ENCODE measurements at regions of chrX and their contacts with region 1.

Region 1: GRCh38 chrX:106894392-106894909 is 8.7 kb downstream of the RIPPLY1 start:
- DNase-seq: peak; percentile 36 to 49 (median 47)
- H3K4me3 ChIP-seq: no peak overlapping the region
- H3K4me3 Mint-ChIP-seq: no peak overlapping the region
- H3K27ac ChIP-seq: no peak overlapping the region
- H3K27ac Mint-ChIP-seq: no peak overlapping the region
- H3K4me1 ChIP-seq: no peaks in the 10 kb centered on the region
- H3K4me1 Mint-ChIP-seq: peaks cover 0 to 4% (median under 1%) of the 10 kb centered on the region in 4 donors
- H3K27me3 ChIP-seq: no peaks in the 10 kb centered on the region
- H3K27me3 Mint-ChIP-seq: no peaks in the 10 kb centered on the region

Region 2: GRCh38 chrX:106302242-106302662 is 592.2 kb before region 1 on chrX:
- CTCF ChIA-PET with region 1: no interaction called
- POLR2A ChIA-PET with region 1: no interaction called
- intact Hi-C with region 1: no loop called
- DNase-seq: no peak
- H3K4me3 ChIP-seq: no peak overlapping the region
- H3K4me3 Mint-ChIP-seq: no peak overlapping the region
- H3K27ac ChIP-seq: no peak overlapping the region
- H3K27ac Mint-ChIP-seq: no peak overlapping the region
- H3K4me1 ChIP-seq: no peaks in the 10 kb centered on the region
- H3K4me1 Mint-ChIP-seq: no peaks in the 10 kb centered on the region
- H3K27me3 ChIP-seq: no peaks in the 10 kb centered on the region
- H3K27me3 Mint-ChIP-seq: peaks cover 0 to 2% of the 10 kb centered on the region in 2 donors

Region 3: DNA sequence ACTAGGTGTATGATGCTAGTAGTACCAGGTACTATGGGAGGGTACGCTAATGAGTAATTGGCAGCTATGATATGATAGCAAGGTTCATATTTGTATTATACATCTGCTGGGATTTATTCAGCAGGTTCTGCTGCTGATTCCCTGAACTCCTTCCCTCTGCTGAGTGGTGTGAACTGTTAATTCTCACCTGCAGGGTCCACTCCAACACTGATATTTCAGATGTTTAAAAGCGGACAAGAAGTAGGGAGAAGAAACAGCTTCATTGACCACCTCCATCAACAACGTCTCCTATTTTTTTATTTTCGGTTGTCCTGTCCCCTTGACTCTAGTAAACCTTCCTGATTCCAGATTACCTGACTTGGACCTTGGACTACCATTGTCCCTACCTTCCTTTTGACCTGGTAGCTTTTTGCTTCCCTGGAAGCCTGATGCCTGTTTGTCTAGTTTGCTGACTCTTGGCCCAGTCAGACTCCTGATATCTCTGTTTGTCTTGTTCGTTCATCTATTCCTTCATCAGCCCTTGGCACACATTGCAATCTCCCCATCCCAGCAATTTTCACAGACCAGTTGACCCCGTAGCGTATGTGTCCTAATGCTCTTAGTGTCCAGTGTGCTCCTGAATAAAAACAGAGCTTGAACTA is 201.9 kb before region 1 on chrX:
- CTCF ChIA-PET with region 1: no interaction called
- POLR2A ChIA-PET with region 1: no interaction called
- intact Hi-C with region 1: no loop called
- DNase-seq: no peak
- H3K4me3 ChIP-seq: no peak overlapping the region
- H3K4me3 Mint-ChIP-seq: no peak overlapping the region
- H3K27ac ChIP-seq: no peak overlapping the region
- H3K27ac Mint-ChIP-seq: no peak overlapping the region
- H3K4me1 ChIP-seq: no peaks in the 10 kb centered on the region
- H3K4me1 Mint-ChIP-seq: no peaks in the 10 kb centered on the region
- H3K27me3 ChIP-seq: no peaks in the 10 kb centered on the region
- H3K27me3 Mint-ChIP-seq: peaks cover 0 to 2% of the 10 kb centered on the region in 2 donors

Region 4: GRCh38 chrX:106952988-106953387 is 58.5 kb after region 1 on chrX:
- CTCF ChIA-PET with region 1: interaction called, 62 read pairs
- POLR2A ChIA-PET with region 1: no interaction called
- intact Hi-C with region 1: loop called (anchors 1 kb)
- DNase-seq: peak in 1 of 5 donors; percentile 6
- H3K4me3 ChIP-seq: no peak overlapping the region
- H3K4me3 Mint-ChIP-seq: no peak overlapping the region
- H3K27ac ChIP-seq: no peak overlapping the region
- H3K27ac Mint-ChIP-seq: no peak overlapping the region
- H3K4me1 ChIP-seq: no peaks in the 10 kb centered on the region
- H3K4me1 Mint-ChIP-seq: no peaks in the 10 kb centered on the region
- H3K27me3 ChIP-seq: no peaks in the 10 kb centered on the region
- H3K27me3 Mint-ChIP-seq: no peaks in the 10 kb centered on the region

Region 5: DNA sequence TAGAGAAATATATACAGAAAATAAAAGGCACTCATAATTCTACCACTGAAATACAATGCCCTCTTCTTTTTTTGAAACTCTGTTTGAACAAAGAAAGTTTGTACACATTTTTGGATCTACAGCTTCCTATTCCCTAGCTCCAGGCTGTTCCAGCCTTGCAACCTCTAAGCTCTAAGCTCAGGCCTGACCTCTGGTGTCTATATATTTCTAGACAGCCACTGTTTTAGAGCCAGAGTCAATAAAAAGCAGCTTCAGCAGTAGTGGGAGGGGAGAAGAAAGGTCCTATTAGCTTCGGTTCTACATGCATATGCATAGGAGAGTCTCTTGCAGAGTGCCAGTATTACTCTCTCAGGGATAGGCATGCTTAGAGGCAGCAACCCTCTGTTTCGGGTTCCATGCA is 65.5 kb after region 1 on chrX:
- CTCF ChIA-PET with region 1: interaction called, 62 read pairs
- POLR2A ChIA-PET with region 1: no interaction called
- intact Hi-C with region 1: no loop called
- DNase-seq: no peak
- H3K4me3 ChIP-seq: no peak overlapping the region
- H3K4me3 Mint-ChIP-seq: no peak overlapping the region
- H3K27ac ChIP-seq: no peak overlapping the region
- H3K27ac Mint-ChIP-seq: no peak overlapping the region
- H3K4me1 ChIP-seq: no peaks in the 10 kb centered on the region
- H3K4me1 Mint-ChIP-seq: no peaks in the 10 kb centered on the region
- H3K27me3 ChIP-seq: no peaks in the 10 kb centered on the region
- H3K27me3 Mint-ChIP-seq: no peaks in the 10 kb centered on the region

Region 6: GRCh38 chrX:107118322-107119147 is 224.1 kb after region 1 on chrX and contains the start of gene RBM41:
- CTCF ChIA-PET with region 1: no interaction called
- POLR2A ChIA-PET with region 1: no interaction called
- intact Hi-C with region 1: loop called (anchors 10 kb)
- DNase-seq: peak; percentile 69 to 88 (median 75)
- H3K4me3 ChIP-seq: peak within 1 kb of the TSS; percentile 72 to 73
- H3K4me3 Mint-ChIP-seq: peak within 1 kb of the TSS; percentile 98 to 100 (median 99)
- H3K27ac ChIP-seq: peak within 1 kb of the TSS; percentile 59
- H3K27ac Mint-ChIP-seq: peak within 1 kb of the TSS; percentile 93 to 98 (median 97)
- H3K4me1 ChIP-seq: peaks cover 17% of the 10 kb centered on the region
- H3K4me1 Mint-ChIP-seq: peaks cover 22 to 47% (median 33%) of the 10 kb centered on the region in 4 donors
- H3K27me3 ChIP-seq: no peaks in the 10 kb centered on the region
- H3K27me3 Mint-ChIP-seq: no peaks in the 10 kb centered on the region
- total RNA-seq, gene RBM41: 27.8 to 29.8 TPM

Region 7: GRCh38 chrX:107429090-107429489 is 534.6 kb after region 1 on chrX:
- CTCF ChIA-PET with region 1: no interaction called
- POLR2A ChIA-PET with region 1: no interaction called
- intact Hi-C with region 1: loop called (anchors 1 kb)
- DNase-seq: peak in 4 of 5 donors; percentile 13 to 19 (median 18)
- H3K4me3 ChIP-seq: no peak overlapping the region
- H3K4me3 Mint-ChIP-seq: no peak overlapping the region
- H3K27ac ChIP-seq: no peak overlapping the region
- H3K27ac Mint-ChIP-seq: peak overlapping the region in 1 of 7 donors; percentile 77
- H3K4me1 ChIP-seq: no peaks in the 10 kb centered on the region
- H3K4me1 Mint-ChIP-seq: peaks cover 0 to 2% (median 0%) of the 10 kb centered on the region in 4 donors
- H3K27me3 ChIP-seq: no peaks in the 10 kb centered on the region
- H3K27me3 Mint-ChIP-seq: peaks cover 1 to 3% of the 10 kb centered on the region in 2 donors

Region 8: GRCh38 chrX:107632346-107632745 is 737.9 kb after region 1 on chrX:
- CTCF ChIA-PET with region 1: no interaction called
- POLR2A ChIA-PET with region 1: no interaction called
- intact Hi-C with region 1: no loop called
- DNase-seq: no peak
- H3K4me3 ChIP-seq: no peak overlapping the region
- H3K4me3 Mint-ChIP-seq: peak overlapping the region in 1 of 8 donors; percentile 26
- H3K27ac ChIP-seq: no peak overlapping the region
- H3K27ac Mint-ChIP-seq: no peak overlapping the region
- H3K4me1 ChIP-seq: peaks cover 36% of the 10 kb centered on the region
- H3K4me1 Mint-ChIP-seq: peaks cover 22 to 51% (median 38%) of the 10 kb centered on the region in 4 donors
- H3K27me3 ChIP-seq: no peaks in the 10 kb centered on the region
- H3K27me3 Mint-ChIP-seq: no peaks in the 10 kb centered on the region

Region 9: DNA sequence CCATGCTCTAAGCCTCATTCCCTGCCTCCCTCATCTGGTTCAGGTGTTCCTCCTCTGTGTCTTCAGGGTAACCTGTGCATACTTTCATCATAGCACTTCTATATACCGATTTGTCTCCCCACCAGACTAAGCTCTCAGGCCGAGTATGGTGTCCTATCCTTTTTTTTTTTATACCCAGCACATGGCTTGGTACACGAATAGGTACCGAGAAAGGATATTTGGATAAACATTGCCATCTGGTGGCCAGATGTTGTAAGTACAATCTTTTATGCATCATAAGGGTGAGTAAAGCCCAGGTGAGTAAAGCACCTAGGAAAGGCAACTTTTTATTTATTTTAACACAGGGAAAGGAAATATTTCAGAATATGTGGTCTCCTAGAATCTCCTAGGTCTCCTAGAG is 999.6 kb after region 1 on chrX:
- CTCF ChIA-PET with region 1: interaction called, 8 read pairs
- POLR2A ChIA-PET with region 1: no interaction called
- intact Hi-C with region 1: loop called (anchors 1 kb)
- DNase-seq: peak; percentile 25 to 69 (median 65)
- H3K4me3 ChIP-seq: no peak overlapping the region
- H3K4me3 Mint-ChIP-seq: no peak overlapping the region
- H3K27ac ChIP-seq: no peak overlapping the region
- H3K27ac Mint-ChIP-seq: peak overlapping the region in 2 of 7 donors; percentile 32 to 76
- H3K4me1 ChIP-seq: no peaks in the 10 kb centered on the region
- H3K4me1 Mint-ChIP-seq: peaks cover 2 to 10% (median 3%) of the 10 kb centered on the region in 4 donors
- H3K27me3 ChIP-seq: no peaks in the 10 kb centered on the region
- H3K27me3 Mint-ChIP-seq: no peaks in the 10 kb centered on the region

Region 10: DNA sequence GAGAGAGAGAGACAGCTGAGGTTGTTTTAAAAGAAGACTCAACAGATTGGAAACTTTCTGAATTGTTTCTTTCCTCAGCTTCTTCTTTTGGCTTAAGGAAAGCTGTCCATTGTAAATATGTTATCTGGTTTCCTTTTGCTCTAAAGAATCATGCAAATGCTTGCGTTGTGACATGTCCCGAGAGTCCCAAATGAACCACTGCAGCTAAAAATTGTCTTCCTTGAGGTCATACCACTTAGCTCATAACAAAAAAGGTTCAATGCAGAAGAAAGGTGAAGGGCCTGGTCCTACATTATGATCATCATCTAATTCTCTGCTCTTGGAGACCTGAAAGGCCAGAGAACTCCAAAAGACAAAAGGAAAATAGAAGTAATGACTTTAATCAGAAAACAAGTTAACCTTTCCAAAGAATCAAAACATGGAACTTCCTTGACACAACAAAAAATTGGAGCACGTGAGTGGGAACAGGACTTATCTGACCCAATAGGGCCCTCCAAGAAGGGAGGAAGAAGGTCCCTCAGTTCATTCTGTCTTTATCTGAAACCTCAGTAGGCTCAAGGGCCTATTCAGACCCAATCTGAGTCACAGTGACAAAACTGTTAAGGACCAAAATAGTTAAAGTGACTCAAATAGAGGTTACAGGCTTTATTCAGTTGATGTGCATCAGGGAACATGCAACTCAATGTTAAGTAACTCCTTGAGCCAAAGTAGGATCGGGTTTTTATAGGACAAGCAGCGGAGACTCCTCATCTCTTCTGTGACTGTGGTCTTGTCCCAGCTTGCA is 1135.7 kb after region 1 on chrX:
- CTCF ChIA-PET with region 1: no interaction called
- POLR2A ChIA-PET with region 1: no interaction called
- intact Hi-C with region 1: no loop called
- DNase-seq: no peak
- H3K4me3 ChIP-seq: no peak overlapping the region
- H3K4me3 Mint-ChIP-seq: no peak overlapping the region
- H3K27ac ChIP-seq: no peak overlapping the region
- H3K27ac Mint-ChIP-seq: peak overlapping the region in 2 of 7 donors; percentile 41 to 42
- H3K4me1 ChIP-seq: peaks cover 20% of the 10 kb centered on the region
- H3K4me1 Mint-ChIP-seq: peaks cover 29 to 62% (median 51%) of the 10 kb centered on the region in 4 donors
- H3K27me3 ChIP-seq: no peaks in the 10 kb centered on the region
- H3K27me3 Mint-ChIP-seq: no peaks in the 10 kb centered on the region